OCI-LY7 (cell line): ENCODE measurements at regions of chr3 and their contacts with region 1.

Region 1: DNA sequence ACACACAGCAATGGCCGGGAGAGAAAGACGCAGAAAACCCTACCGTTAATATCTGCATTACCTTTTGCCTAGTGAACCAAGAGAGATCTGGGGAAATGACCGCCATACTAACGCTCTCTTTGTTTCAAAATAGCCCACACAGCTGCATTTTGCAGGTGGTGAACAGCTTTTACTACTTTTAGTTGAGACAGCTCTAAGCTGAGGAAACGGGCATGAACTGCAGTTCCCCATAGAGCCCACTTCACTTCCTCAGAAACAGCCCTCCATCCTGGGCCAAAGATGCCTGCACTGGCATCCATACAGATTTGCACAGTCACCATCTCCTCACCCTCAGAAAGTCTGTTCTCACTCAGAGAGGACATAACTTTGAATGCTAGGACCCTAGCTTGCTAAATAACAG is 45.0 kb downstream of the ZNF860 start:
- DNase-seq: peak; percentile 98
- H3K4me3 ChIP-seq: peak overlapping the region; percentile 42
- H3K27ac ChIP-seq: peak overlapping the region; percentile 100
- H3K4me1 ChIP-seq: peaks cover 61% of the 10 kb centered on the region
- CTCF ChIP-seq: no peak

Region 2: GRCh38 chr3:31858439-31858838 is 168.2 kb before region 1 on chr3:
- CTCF ChIA-PET with region 1: no interaction called
- POLR2A ChIA-PET with region 1: interaction called, 3 read pairs
- intact Hi-C with region 1: loop called (anchors 5 kb)
- DNase-seq: peak; percentile 74
- H3K4me3 ChIP-seq: no peak overlapping the region
- H3K27ac ChIP-seq: peak overlapping the region; percentile 53
- H3K4me1 ChIP-seq: peaks cover 95% of the 10 kb centered on the region
- CTCF ChIP-seq: peak; percentile 72

Region 3: GRCh38 chr3:31925271-31925630 is 101.3 kb before region 1 on chr3:
- CTCF ChIA-PET with region 1: no interaction called
- POLR2A ChIA-PET with region 1: no interaction called
- intact Hi-C with region 1: loop called (anchors 5 kb)
- DNase-seq: peak; percentile 60
- H3K4me3 ChIP-seq: peak overlapping the region; percentile 53
- H3K27ac ChIP-seq: peak overlapping the region; percentile 94
- H3K4me1 ChIP-seq: peaks cover 99% of the 10 kb centered on the region
- CTCF ChIP-seq: no peak

Region 4: GRCh38 chr3:31968927-31969418 is 57.6 kb before region 1 on chr3:
- CTCF ChIA-PET with region 1: no interaction called
- POLR2A ChIA-PET with region 1: interaction called, 10 read pairs
- intact Hi-C with region 1: no loop called
- DNase-seq: no peak
- H3K4me3 ChIP-seq: peak overlapping the region; percentile 91
- H3K27ac ChIP-seq: peak overlapping the region; percentile 88
- H3K4me1 ChIP-seq: peaks cover 88% of the 10 kb centered on the region
- CTCF ChIP-seq: no peak

Region 5: DNA sequence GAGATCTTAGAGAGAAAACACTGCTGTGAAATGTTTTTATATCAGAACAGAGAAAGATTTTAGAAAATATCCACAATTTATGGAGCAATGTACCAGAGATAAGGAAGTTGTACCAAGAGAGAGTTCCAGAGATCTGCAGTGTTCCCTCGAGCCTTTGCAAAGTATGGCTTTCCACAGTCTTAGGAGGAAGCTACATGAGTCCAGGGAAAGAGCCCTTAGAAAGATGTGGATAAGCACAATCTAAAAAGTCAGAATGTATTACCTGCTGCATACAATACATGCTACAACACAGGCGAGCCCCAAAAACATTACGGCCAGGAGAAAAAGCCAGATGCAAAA is 11.3 kb after region 1 on chr3:
- CTCF ChIA-PET with region 1: no interaction called
- POLR2A ChIA-PET with region 1: interaction called, 20 read pairs
- intact Hi-C with region 1: no loop called
- DNase-seq: no peak
- H3K4me3 ChIP-seq: no peak overlapping the region
- H3K27ac ChIP-seq: no peak overlapping the region
- H3K4me1 ChIP-seq: peaks cover 9% of the 10 kb centered on the region
- CTCF ChIP-seq: no peak

Region 6: DNA sequence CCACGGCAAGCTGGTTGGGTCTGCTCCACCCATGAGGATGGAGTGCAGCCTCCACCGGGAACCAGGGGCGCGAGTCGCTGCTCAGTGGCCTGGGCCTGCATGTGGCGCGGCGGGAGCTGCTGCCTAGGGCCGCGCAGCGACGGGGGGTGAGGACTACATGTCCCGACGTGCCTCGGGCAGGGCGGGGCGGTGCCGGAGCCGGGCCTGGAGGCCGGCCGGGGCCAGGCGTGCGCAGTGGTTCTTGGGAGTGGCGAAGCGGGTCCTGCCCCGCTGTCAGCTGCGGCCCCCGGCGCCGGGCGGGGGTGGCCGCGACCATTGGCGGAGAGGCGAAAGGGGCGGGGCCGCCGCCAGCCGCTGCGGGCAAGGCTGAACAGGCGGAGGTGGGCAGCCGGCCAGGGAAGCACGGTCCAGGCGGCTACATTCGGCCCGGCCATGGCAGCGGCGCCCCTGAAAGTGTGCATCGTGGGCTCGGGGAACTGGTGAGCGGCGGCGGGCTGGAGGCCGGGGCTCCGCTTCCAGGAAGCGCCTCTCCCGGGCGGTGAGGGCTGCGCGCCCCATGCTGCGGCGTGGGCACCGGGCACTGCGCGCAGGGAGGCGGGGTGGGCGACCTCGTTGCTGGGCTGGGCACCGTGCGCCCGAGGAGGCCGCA is 79.8 kb after region 1 on chr3 and contains the start of gene GPD1L:
- CTCF ChIA-PET with region 1: no interaction called
- POLR2A ChIA-PET with region 1: interaction called, 3 read pairs
- intact Hi-C with region 1: loop called (anchors 2 kb)
- DNase-seq: peak; percentile 96
- H3K4me3 ChIP-seq: peak within 1 kb of the TSS; percentile 93
- H3K27ac ChIP-seq: no peak within 1 kb of the TSS
- H3K4me1 ChIP-seq: peaks cover 12% of the 10 kb centered on the region
- CTCF ChIP-seq: 0 out of 2 replicates have a peak, but pooled peaks have one; percentile 10
- total RNA-seq, gene GPD1L: 27.5 and 30.4 TPM in 2 replicates